Activated B cell treated with CpG ODN at 0.5 μM for 24 hours (primary cell): ENCODE measurements at regions of chrX and their contacts with region 1.

Region 1: DNA sequence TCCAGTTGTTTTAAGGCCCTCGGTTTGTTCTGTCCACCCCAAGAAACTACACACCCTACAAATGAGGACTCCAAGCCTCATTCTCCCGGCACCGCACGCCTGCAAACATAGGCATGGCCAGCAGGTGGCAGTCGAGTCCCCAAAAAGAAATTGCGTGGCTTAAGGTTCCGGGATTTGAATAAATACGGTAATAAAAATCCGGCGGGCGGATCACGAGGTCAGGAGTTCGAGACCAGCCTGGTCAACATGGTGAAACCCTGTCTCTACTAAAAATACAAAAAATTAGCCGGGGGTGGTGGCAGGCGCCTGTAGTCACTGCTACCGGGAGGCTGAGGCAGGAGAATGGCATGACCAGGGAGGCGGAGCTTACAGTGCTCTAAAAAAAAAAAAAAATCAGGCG is 21.8 kb upstream of the CSF2RA start:
- DNase-seq: peak; percentile 71
- ATAC-seq: peak; percentile 65
- H3K4me3 Mint-ChIP-seq: no peak overlapping the region
- H3K27ac Mint-ChIP-seq: no peak overlapping the region
- H3K4me1 Mint-ChIP-seq: peaks cover 22% of the 10 kb centered on the region
- H3K27me3 Mint-ChIP-seq: peaks cover 5% of the 10 kb centered on the region
- CTCF ChIP-seq: no peak

Region 2: GRCh38 chrX:1336331-1336943 is 89.6 kb after region 1 on chrX and contains the start of gene IL3RA:
- CTCF ChIA-PET with region 1: no interaction called
- POLR2A ChIA-PET with region 1: no interaction called
- intact Hi-C with region 1: loop called (anchors 10 kb)
- DNase-seq: no peak
- ATAC-seq: peak; percentile 45
- H3K4me3 Mint-ChIP-seq: peak within 1 kb of the TSS; percentile 86
- H3K27ac Mint-ChIP-seq: peak within 1 kb of the TSS; percentile 59
- H3K4me1 Mint-ChIP-seq: peaks cover 22% of the 10 kb centered on the region
- H3K27me3 Mint-ChIP-seq: no peaks in the 10 kb centered on the region
- CTCF ChIP-seq: no peak
- total RNA-seq, gene IL3RA: 0.53 and 0.66 TPM in 2 replicates

Region 3: GRCh38 chrX:1657367-1658070 is 410.7 kb after region 1 on chrX:
- CTCF ChIA-PET with region 1: no interaction called
- POLR2A ChIA-PET with region 1: no interaction called
- intact Hi-C with region 1: loop called (anchors 10 kb)
- DNase-seq: peak; percentile 18
- ATAC-seq: no peak
- H3K4me3 Mint-ChIP-seq: peak overlapping the region; percentile 80
- H3K27ac Mint-ChIP-seq: peak overlapping the region; percentile 81
- H3K4me1 Mint-ChIP-seq: peaks cover 27% of the 10 kb centered on the region
- H3K27me3 Mint-ChIP-seq: no peaks in the 10 kb centered on the region
- CTCF ChIP-seq: no peak

Region 4: GRCh38 chrX:2608638-2609430 is 1362.0 kb after region 1 on chrX:
- CTCF ChIA-PET with region 1: no interaction called
- POLR2A ChIA-PET with region 1: no interaction called
- intact Hi-C with region 1: loop called (anchors 1 kb)
- DNase-seq: peak; percentile 84
- ATAC-seq: peak; percentile 97
- H3K4me3 Mint-ChIP-seq: peak overlapping the region; percentile 93
- H3K27ac Mint-ChIP-seq: peak overlapping the region; percentile 81
- H3K4me1 Mint-ChIP-seq: peaks cover 36% of the 10 kb centered on the region
- H3K27me3 Mint-ChIP-seq: no peaks in the 10 kb centered on the region
- CTCF ChIP-seq: no peak